GM12878 (cell line): ENCODE measurements at regions of chr5 and their contacts with region 1.

Region 1: DNA sequence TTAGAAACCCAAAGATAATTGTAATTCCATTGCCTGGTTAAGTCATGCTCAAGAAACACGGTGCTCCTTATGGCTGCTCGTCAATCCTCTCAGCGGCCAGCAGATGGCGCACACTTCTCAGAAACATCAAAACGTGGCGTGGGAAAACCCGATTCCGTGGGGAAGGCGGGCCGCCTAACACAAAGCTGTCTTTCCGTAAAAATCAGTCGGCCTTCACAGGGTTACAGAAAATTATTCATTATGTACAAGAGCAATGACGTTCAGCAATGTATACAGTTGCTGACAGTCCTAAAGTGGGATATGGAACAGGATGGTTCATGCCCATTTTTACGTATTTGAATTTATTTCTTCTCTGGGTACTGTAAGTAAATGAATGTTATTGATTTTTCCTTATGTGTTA is 83.5 kb downstream of the PDE4D start:
- DNase-seq: no peak
- ATAC-seq: peak; percentile 83
- H3K4me3 ChIP-seq: no peak overlapping the region
- H3K27ac ChIP-seq: no peak overlapping the region
- H3K4me1 ChIP-seq: no peaks in the 10 kb centered on the region
- H3K27me3 ChIP-seq: no peaks in the 10 kb centered on the region; a peak in 1 of 4 replicates
- CTCF ChIP-seq: peak; percentile 86 to 89 (median 86)
- EP300 ChIP-seq: no peak
- POLR2A ChIP-seq: no peak
- RAD21 ChIP-seq: peak; percentile 76

Region 2: DNA sequence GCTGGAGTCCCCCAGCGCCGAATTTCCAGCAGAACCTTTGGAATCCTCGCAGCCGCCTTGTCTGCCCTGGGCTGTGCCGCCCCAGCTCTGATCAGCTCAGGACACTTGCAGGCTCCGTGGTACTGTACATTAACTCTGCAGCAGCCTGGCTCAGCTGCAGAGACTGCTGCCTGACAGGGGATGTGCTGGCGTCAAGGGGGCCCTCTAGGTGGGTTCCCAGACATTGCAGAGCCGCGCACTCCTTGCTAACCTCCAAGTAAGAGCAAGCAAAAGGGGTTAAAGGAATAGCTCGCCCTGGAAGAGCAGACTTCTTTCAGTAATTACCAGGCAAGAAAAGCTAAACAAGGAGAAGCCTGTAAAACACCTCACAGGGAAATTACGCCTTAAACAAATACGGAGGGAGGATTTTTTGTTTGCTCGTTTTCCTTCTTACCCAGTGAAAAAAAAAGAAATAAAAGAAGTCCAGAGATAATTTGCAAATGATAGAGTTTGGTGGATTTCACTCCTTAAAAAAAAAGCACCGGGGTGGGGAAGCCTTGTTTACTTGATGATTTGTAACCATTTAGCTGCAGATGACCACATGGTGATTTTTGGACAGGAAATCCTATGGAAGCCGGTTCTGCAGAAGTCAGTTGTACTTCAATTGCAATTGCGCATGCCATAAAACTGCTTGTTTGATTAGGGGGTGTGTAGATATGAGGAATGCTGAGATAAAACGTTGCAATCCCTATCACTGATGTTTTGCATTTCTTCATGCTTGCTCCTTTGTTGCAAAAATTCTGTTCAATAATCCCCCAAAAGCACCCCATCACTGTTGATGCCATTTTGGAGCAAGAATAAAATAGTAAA is 222.3 kb before region 1 on chr5:
- CTCF ChIA-PET with region 1: no interaction called
- POLR2A ChIA-PET with region 1: no interaction called
- RAD21 ChIA-PET with region 1: no interaction called
- SMC1A ChIA-PET with region 1: no interaction called
- in situ Hi-C with region 1: no loop called
- intact Hi-C with region 1: no loop called
- DNase-seq: no peak
- ATAC-seq: no peak
- H3K4me3 ChIP-seq: no peak overlapping the region
- H3K27ac ChIP-seq: no peak overlapping the region
- H3K4me1 ChIP-seq: 0 out of 2 replicates have a peak, but pooled peaks cover 3% of the 10 kb centered on the region
- H3K27me3 ChIP-seq: no peaks in the 10 kb centered on the region; a peak in 2 of 4 replicates
- CTCF ChIP-seq: no peak
- EP300 ChIP-seq: no peak
- POLR2A ChIP-seq: no peak
- RAD21 ChIP-seq: no peak

Region 3: DNA sequence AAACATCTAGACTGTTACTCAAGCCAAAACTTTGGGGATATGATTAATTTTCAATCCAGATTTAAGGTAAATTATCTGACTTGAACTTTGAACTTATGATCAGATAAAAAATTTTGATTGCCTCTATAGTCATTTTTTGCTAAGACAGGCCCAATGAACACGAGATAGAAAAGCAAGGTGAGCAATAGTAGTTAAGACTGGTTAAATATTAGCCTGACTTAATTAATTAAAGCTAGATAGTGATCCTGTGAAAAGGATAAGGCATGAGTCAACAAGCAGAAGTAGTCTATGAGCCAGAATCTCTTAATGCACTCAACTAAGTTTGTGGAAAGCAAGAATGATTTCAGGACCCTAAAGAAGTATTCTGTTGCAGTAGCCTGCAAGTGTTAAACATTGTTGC is 17.0 kb after region 1 on chr5:
- CTCF ChIA-PET with region 1: interaction called, 14 read pairs
- POLR2A ChIA-PET with region 1: no interaction called
- RAD21 ChIA-PET with region 1: interaction called, 3 read pairs
- SMC1A ChIA-PET with region 1: no interaction called
- in situ Hi-C with region 1: no loop called
- intact Hi-C with region 1: no loop called
- DNase-seq: no peak
- ATAC-seq: no peak
- H3K4me3 ChIP-seq: no peak overlapping the region
- H3K27ac ChIP-seq: no peak overlapping the region
- H3K4me1 ChIP-seq: no peaks in the 10 kb centered on the region
- H3K27me3 ChIP-seq: no peaks in the 10 kb centered on the region; a peak in 1 of 4 replicates
- CTCF ChIP-seq: no peak
- EP300 ChIP-seq: no peak
- POLR2A ChIP-seq: no peak
- RAD21 ChIP-seq: no peak

Region 4: DNA sequence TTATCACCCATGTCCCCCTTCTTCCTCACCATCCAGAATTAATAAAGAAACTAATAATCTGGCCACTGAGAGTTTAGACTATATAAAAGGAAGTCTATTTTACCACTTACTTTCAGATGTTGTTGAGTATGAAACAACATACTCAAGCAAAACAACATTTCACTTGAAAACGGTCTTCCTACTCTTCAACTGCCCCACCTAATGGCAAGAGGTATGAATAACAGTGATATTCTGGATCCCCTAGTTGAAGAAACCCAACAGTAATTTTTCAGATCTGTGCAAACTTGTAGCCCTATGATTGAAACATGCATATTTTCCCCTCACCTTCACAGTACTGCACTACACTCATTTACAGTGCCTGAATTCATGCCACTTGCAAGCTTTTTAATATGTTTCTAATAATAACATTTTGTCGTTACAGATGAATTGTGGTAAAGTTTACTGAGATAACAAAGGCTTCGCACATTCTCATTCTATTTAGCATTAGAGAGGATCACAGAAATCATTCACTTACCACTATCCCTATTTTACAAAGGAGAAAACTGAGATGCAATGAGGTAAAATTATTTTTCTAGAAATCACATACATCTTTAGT is 351.4 kb after region 1 on chr5:
- CTCF ChIA-PET with region 1: interaction called, 13 read pairs
- POLR2A ChIA-PET with region 1: no interaction called
- RAD21 ChIA-PET with region 1: interaction called, 8 read pairs
- SMC1A ChIA-PET with region 1: interaction called, 5 read pairs
- in situ Hi-C with region 1: loop called (anchors 5 kb)
- intact Hi-C with region 1: loop called (anchors 1 kb)
- DNase-seq: peak; percentile 4
- ATAC-seq: peak; percentile 73
- H3K4me3 ChIP-seq: no peak overlapping the region
- H3K27ac ChIP-seq: no peak overlapping the region
- H3K4me1 ChIP-seq: no peaks in the 10 kb centered on the region
- H3K27me3 ChIP-seq: no peaks in the 10 kb centered on the region
- CTCF ChIP-seq: peak; percentile 51 to 61 (median 57); a peak in 5 of 6 replicates
- EP300 ChIP-seq: no peak
- POLR2A ChIP-seq: no peak
- RAD21 ChIP-seq: peak; percentile 68

Region 5: DNA sequence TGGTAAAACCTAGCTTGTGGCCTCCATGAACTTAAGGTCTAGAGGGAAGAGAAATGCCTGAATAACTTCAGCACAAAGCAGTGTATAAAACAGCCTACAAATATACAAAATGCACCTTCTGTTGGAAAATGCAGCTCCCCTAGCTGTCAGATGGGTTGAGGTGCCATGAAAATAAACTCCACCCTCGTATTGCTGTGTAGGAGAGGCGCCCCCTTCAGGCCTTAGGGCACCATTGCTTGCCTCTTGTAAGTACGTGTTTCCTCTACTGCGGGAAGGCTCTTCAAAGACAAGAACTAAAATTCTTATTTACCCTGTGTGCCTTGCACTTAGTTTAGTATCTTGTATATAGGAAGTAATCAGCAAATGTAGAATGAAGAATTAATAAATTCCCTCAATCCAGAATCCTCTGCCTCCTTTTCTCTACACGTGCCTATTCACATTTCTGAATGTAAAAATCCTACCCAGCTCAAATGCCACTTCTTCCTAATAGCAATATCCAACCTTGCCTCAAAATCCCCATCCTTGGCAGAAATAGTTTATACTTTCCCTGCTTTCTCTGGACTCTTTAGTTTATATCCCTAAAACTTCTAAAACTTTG is 477.2 kb after region 1 on chr5:
- CTCF ChIA-PET with region 1: interaction called, 45 read pairs
- POLR2A ChIA-PET with region 1: no interaction called
- RAD21 ChIA-PET with region 1: interaction called, 18 read pairs
- SMC1A ChIA-PET with region 1: interaction called, 22 read pairs
- in situ Hi-C with region 1: no loop called
- intact Hi-C with region 1: loop called (anchors 1 kb)
- DNase-seq: no peak
- ATAC-seq: peak; percentile 98
- H3K4me3 ChIP-seq: no peak overlapping the region
- H3K27ac ChIP-seq: no peak overlapping the region
- H3K4me1 ChIP-seq: no peaks in the 10 kb centered on the region
- H3K27me3 ChIP-seq: no peaks in the 10 kb centered on the region
- CTCF ChIP-seq: peak; percentile 70 to 82 (median 72)
- EP300 ChIP-seq: no peak
- POLR2A ChIP-seq: no peak
- RAD21 ChIP-seq: peak; percentile 64

Region 6: DNA sequence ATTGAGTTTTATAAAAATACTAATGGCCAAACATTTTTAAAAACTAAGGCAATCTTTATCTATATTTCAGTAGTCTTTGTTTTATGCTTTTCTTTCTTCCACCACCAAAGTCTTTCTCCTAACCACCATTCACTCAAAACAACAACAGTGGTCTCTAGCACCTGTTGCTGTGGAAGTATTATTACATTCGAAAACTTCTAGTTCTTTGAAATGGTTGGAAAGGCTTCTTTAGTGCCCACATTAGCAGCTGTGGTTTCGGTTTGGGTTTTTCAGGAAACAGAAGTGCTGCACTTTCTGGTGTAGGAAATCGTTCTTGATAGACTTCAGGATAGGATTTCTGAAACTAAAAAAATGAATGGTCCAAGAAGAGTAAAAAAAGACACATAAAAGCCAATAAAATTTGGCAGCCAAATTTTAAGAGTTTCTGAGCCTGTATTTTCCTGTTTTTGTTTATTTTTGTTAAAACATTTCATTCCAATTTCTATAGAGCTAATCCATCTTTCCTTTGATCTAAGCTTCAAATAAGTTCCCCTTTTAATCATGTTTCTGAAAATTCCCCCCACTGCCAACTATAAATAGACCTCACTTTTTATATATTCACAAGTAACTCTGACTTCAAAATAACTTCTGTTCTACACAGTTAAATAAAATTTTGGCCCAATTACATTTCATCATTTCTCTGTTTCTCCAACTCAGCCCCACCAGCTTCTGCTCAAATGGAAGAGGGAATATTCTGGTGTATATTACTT is 787.7 kb after region 1 on chr5:
- CTCF ChIA-PET with region 1: interaction called, 3 read pairs
- POLR2A ChIA-PET with region 1: no interaction called
- RAD21 ChIA-PET with region 1: no interaction called
- SMC1A ChIA-PET with region 1: no interaction called
- in situ Hi-C with region 1: no loop called
- intact Hi-C with region 1: loop called (anchors 5 kb)
- DNase-seq: peak; percentile 60
- ATAC-seq: peak; percentile 85
- H3K4me3 ChIP-seq: 0 out of 2 replicates have a peak overlapping the region, but pooled peaks have one; percentile 18
- H3K27ac ChIP-seq: peak overlapping the region; percentile 65
- H3K4me1 ChIP-seq: peaks cover 26% of the 10 kb centered on the region
- H3K27me3 ChIP-seq: no peaks in the 10 kb centered on the region
- CTCF ChIP-seq: no peak
- EP300 ChIP-seq: peak; percentile 49 to 77; a peak in 3 of 4 replicates
- POLR2A ChIP-seq: no peak
- RAD21 ChIP-seq: 0 out of 2 replicates have a peak, but pooled peaks have one; percentile 7

Region 7: DNA sequence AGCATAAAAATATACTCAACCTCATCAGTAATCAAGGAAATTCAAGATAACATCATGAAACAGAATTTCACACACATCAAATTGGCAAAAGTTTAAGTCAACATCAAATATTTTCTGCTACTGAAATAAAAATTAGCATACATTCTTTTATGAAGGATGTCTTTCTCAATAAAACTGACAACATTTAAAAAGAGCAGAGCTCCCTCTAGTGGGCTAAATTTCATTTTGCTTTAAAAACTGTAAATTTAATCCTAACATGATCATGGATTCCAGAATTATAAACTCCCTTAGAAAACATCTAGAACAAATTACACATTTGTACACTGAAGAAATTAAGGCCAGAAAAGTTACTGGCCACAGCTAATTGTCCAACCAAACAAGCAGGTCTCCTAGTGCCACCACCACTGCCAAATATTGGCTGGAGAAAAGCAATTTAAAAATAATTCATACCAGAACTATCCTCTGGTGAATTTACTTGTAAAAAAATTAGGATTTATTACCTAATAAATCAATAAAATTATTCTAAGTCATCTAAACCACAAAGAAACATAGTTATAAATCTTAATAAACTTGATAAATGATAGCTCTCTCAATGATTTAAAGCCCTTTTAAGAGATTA is 858.8 kb after region 1 on chr5:
- CTCF ChIA-PET with region 1: interaction called, 38 read pairs
- POLR2A ChIA-PET with region 1: no interaction called
- RAD21 ChIA-PET with region 1: interaction called, 14 read pairs
- SMC1A ChIA-PET with region 1: interaction called, 8 read pairs
- in situ Hi-C with region 1: loop called (anchors 5 kb)
- intact Hi-C with region 1: loop called (anchors 1 kb)
- DNase-seq: no peak
- ATAC-seq: no peak; the same call in 2 of the 3 replicates
- H3K4me3 ChIP-seq: no peak overlapping the region
- H3K27ac ChIP-seq: no peak overlapping the region
- H3K4me1 ChIP-seq: no peaks in the 10 kb centered on the region
- H3K27me3 ChIP-seq: no peaks in the 10 kb centered on the region
- CTCF ChIP-seq: peak; percentile 31 to 56 (median 46); a peak in 4 of 6 replicates
- EP300 ChIP-seq: no peak
- POLR2A ChIP-seq: no peak
- RAD21 ChIP-seq: peak; percentile 45